ENCODE measurements at regions of chr3 and their contacts with region 1.

Region 1: GRCh38 chr3:63961891-63962290 is 49.7 kb upstream of the SCAANT1 start:
- DNase-seq: no peak
- H3K4me3 Mint-ChIP-seq: no peak overlapping the region
- H3K27ac Mint-ChIP-seq: no peak overlapping the region
- H3K4me1 Mint-ChIP-seq: peaks cover 63% of the 10 kb centered on the region
- H3K27me3 Mint-ChIP-seq: no peaks in the 10 kb centered on the region

Region 2: DNA sequence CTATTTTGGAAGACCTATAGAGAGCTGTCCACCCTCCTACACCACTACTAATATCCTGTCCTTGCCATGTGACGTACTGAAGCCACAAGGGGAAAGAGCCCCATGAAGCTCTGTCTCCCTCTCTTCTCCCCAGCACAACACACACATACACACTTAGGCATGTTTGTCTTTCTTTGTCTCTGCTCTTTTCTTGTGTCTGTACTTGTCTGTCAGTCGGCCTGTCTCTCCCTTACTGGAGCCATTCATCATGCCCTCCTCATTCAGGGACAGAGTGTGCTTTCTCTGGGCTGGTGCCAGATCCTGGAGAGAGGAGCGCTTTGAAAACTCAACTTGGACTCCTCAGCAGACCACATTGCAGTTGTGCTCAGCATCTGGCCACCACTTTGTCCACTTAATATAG is 13.8 kb after region 1 on chr3:
- CTCF ChIA-PET with region 1: interaction called, 130 read pairs
- POLR2A ChIA-PET with region 1: interaction called, 51 read pairs
- intact Hi-C with region 1: loop called (anchors 2 kb)
- DNase-seq: no peak
- H3K4me3 Mint-ChIP-seq: no peak overlapping the region
- H3K27ac Mint-ChIP-seq: peak overlapping the region; percentile 63
- H3K4me1 Mint-ChIP-seq: peaks cover 92% of the 10 kb centered on the region
- H3K27me3 Mint-ChIP-seq: no peaks in the 10 kb centered on the region

Region 3: GRCh38 chr3:64011685-64012084 is 49.8 kb after region 1 on chr3:
- CTCF ChIA-PET with region 1: interaction called, 12 read pairs
- POLR2A ChIA-PET with region 1: no interaction called
- intact Hi-C with region 1: no loop called
- DNase-seq: no peak
- H3K4me3 Mint-ChIP-seq: no peak overlapping the region
- H3K27ac Mint-ChIP-seq: peak overlapping the region; percentile 39
- H3K4me1 Mint-ChIP-seq: peaks cover 35% of the 10 kb centered on the region
- H3K27me3 Mint-ChIP-seq: no peaks in the 10 kb centered on the region

Region 4: GRCh38 chr3:64207289-64208080 is 245.6 kb after region 1 on chr3:
- CTCF ChIA-PET with region 1: no interaction called
- POLR2A ChIA-PET with region 1: no interaction called
- intact Hi-C with region 1: no loop called
- DNase-seq: no peak
- H3K4me3 Mint-ChIP-seq: no peak overlapping the region
- H3K27ac Mint-ChIP-seq: no peak overlapping the region
- H3K4me1 Mint-ChIP-seq: no peaks in the 10 kb centered on the region
- H3K27me3 Mint-ChIP-seq: peaks cover 6% of the 10 kb centered on the region

Measured in activated CD4-positive, alpha-beta memory T cell treated with anti-CD3 and anti-CD28 coated beads for 36 hours (primary cell).